Mammary epithelial cell (primary cell): ENCODE measurements at regions of chr19 and their contacts with region 1.

Region 1: DNA sequence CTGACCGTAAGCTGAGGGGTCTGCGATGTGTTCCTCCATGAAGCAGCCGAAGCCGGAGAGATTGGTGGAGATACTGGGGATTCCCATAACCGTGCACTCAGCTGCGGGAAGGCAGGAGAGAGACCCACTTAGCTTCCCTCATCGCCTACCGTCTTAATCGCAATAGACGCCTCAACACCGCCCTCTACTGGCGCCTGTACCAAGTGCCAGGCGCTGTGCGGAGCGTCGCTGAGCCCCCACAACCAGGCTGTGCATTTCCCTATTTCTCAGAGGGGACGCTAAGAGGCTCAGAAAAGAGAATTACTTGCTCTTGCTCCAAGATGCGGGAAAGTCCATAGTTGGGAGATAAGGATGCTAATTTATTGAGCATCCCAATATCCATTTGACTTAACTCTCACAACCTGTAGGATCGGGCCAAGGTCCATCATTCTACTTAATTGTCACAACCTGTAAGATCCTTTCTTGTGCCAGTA is 5.8 kb downstream of the FTL start:
- DNase-seq: no peak
- H3K4me3 ChIP-seq: no peak overlapping the region
- H3K27ac ChIP-seq: no peak overlapping the region
- H3K4me1 ChIP-seq: peaks cover 5% of the 10 kb centered on the region
- H3K27me3 ChIP-seq: no peaks in the 10 kb centered on the region
- CTCF ChIP-seq: peak; percentile 92 to 93

Region 2: GRCh38 chr19:48835734-48836088 is 135.2 kb before region 1 on chr19:
- CTCF ChIA-PET with region 1: no interaction called
- dilution Hi-C with region 1: no loop called
- in situ Hi-C with region 1: no loop called
- intact Hi-C with region 1: loop called (anchors 2 kb)
- DNase-seq: peak; percentile 76
- H3K4me3 ChIP-seq: peak overlapping the region in 1 of 3 experiments; percentile 24
- H3K27ac ChIP-seq: no peak overlapping the region
- H3K4me1 ChIP-seq: peaks cover 5% of the 10 kb centered on the region
- H3K27me3 ChIP-seq: no peaks in the 10 kb centered on the region
- CTCF ChIP-seq: peak; percentile 92 to 95

Region 3: GRCh38 chr19:48881741-48882657 is 89.0 kb before region 1 on chr19:
- CTCF ChIA-PET with region 1: interaction called, 3 read pairs
- dilution Hi-C with region 1: no loop called
- in situ Hi-C with region 1: no loop called
- intact Hi-C with region 1: loop called (anchors 1 kb)
- DNase-seq: peak; percentile 26
- H3K4me3 ChIP-seq: no peak overlapping the region
- H3K27ac ChIP-seq: no peak overlapping the region
- H3K4me1 ChIP-seq: no peaks in the 10 kb centered on the region
- H3K27me3 ChIP-seq: no peaks in the 10 kb centered on the region
- CTCF ChIP-seq: no peak

Region 4: GRCh38 chr19:49133621-49134454 is 162.9 kb after region 1 on chr19:
- CTCF ChIA-PET with region 1: no interaction called
- dilution Hi-C with region 1: no loop called
- in situ Hi-C with region 1: no loop called
- intact Hi-C with region 1: no loop called
- DNase-seq: no peak
- H3K4me3 ChIP-seq: no peak overlapping the region
- H3K27ac ChIP-seq: no peak overlapping the region
- H3K4me1 ChIP-seq: no peaks in the 10 kb centered on the region
- H3K27me3 ChIP-seq: no peaks in the 10 kb centered on the region
- CTCF ChIP-seq: no peak